H1 (cell line): ENCODE measurements at regions of chr12 and their contacts with region 1.

Region 1: DNA sequence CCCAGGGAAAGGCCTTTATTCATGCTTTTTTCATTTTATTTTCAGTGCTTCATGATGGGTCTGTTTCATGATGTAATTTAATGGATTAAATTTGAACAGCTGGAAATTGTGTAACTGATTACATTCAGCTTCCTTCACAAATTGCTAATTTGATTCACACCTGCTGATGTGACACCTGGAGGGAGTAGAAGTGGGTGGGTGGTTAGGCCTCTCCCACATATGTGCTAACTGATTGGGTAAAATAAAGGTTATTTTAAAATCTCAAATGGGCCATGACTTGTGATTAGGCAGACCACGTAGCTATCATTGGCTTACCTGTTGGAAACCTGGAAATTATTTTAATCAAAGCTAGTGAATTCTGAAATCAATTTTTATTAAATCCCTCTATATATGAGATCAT is 142.1 kb downstream of the GXYLT1 start:
- DNase-seq: no peak
- H3K4me3 ChIP-seq: no peak overlapping the region
- H3K27ac ChIP-seq: no peak overlapping the region
- H3K4me1 ChIP-seq: no peaks in the 10 kb centered on the region; a peak in 3 of 7 replicates
- H3K27me3 ChIP-seq: no peaks in the 10 kb centered on the region
- CTCF ChIP-seq: no peak
- EP300 ChIP-seq: no peak
- POLR2A ChIP-seq: no peak
- RAD21 ChIP-seq: no peak

Region 2: GRCh38 chr12:42023733-42024494 is 21.4 kb after region 1 on chr12:
- CTCF ChIA-PET with region 1: interaction called, 11 read pairs
- POLR2A ChIA-PET with region 1: no interaction called
- DNase-seq: peak; percentile 46 to 92
- H3K4me3 ChIP-seq: peak overlapping the region in 1 of 4 experiments; percentile 32; a peak in 1 of 8 replicates
- H3K27ac ChIP-seq: no peak overlapping the region
- H3K4me1 ChIP-seq: no peaks in the 10 kb centered on the region
- H3K27me3 ChIP-seq: peaks cover 0 to 3% (median under 1%) of the 10 kb centered on the region in 4 experiments; a peak in 2 of 7 replicates
- CTCF ChIP-seq: peak; percentile 91 to 94 (median 94)
- EP300 ChIP-seq: 0 out of 3 replicates have a peak, but pooled peaks of 1 of the 2 experiments have one; percentile 35
- POLR2A ChIP-seq: no peak
- RAD21 ChIP-seq: peak; percentile 97 to 98

Region 3: GRCh38 chr12:42059127-42059526 is 56.6 kb after region 1 on chr12:
- CTCF ChIA-PET with region 1: no interaction called
- POLR2A ChIA-PET with region 1: no interaction called
- DNase-seq: no peak
- H3K4me3 ChIP-seq: no peak overlapping the region
- H3K27ac ChIP-seq: no peak overlapping the region
- H3K4me1 ChIP-seq: no peaks in the 10 kb centered on the region
- H3K27me3 ChIP-seq: no peaks in the 10 kb centered on the region
- CTCF ChIP-seq: no peak
- EP300 ChIP-seq: no peak
- POLR2A ChIP-seq: no peak
- RAD21 ChIP-seq: no peak